ENCODE measurements at regions of chr5 and their contacts with region 1.

Region 1: GRCh38 chr5:118314931-118315330 is 673.4 kb downstream of the DTWD2 start:
- DNase-seq: no peak
- ATAC-seq: no peak
- H3K4me3 ChIP-seq: no peak overlapping the region
- H3K27ac ChIP-seq: no peak overlapping the region
- H3K4me1 ChIP-seq: no peaks in the 10 kb centered on the region
- H3K27me3 ChIP-seq: no peaks in the 10 kb centered on the region
- CTCF ChIP-seq: no peak
- POLR2A ChIP-seq: no peak

Region 2: DNA sequence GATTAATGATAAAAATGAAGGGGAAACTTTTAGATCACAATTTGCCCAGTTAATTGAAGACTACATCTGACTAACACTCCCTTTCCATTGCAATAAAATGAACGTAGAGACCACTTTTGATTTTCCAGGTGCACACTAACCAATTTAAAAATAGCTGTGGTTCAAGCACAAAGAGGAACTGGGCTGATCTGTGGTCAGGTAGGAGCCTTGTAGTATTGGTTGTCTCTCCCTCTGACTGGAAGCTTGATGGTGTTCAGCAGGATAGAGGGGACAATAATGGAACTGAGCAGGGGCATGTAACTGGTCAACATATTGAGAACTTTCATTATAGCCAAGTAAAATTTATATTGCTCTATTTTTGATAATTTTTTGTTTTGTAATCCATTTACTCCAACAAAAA is 853.5 kb before region 1 on chr5:
- intact Hi-C with region 1: loop called in 1 of 10 experiments (anchors 10 kb)
- DNase-seq: no peak
- ATAC-seq: no peak
- H3K4me3 ChIP-seq: no peak overlapping the region
- H3K27ac ChIP-seq: no peak overlapping the region
- H3K4me1 ChIP-seq: peaks cover 0 to 8% (median 0%) of the 10 kb centered on the region in 12 donors
- H3K27me3 ChIP-seq: no peaks in the 10 kb centered on the region
- CTCF ChIP-seq: no peak
- POLR2A ChIP-seq: no peak